Sciatic nerve (tissue), 2 donors: ENCODE measurements at regions of chr16 and their contacts with region 1.

Region 1: GRCh38 chr16:87874639-87875465 is 5.5 kb upstream of the SLC7A5 start:
- DNase-seq: no peak
- ATAC-seq: no peak

Region 2: GRCh38 chr16:87780385-87780989 is 94.4 kb before region 1 on chr16:
- intact Hi-C with region 1: loop called (anchors 5 kb)
- DNase-seq: no peak
- ATAC-seq: no peak

Region 3: DNA sequence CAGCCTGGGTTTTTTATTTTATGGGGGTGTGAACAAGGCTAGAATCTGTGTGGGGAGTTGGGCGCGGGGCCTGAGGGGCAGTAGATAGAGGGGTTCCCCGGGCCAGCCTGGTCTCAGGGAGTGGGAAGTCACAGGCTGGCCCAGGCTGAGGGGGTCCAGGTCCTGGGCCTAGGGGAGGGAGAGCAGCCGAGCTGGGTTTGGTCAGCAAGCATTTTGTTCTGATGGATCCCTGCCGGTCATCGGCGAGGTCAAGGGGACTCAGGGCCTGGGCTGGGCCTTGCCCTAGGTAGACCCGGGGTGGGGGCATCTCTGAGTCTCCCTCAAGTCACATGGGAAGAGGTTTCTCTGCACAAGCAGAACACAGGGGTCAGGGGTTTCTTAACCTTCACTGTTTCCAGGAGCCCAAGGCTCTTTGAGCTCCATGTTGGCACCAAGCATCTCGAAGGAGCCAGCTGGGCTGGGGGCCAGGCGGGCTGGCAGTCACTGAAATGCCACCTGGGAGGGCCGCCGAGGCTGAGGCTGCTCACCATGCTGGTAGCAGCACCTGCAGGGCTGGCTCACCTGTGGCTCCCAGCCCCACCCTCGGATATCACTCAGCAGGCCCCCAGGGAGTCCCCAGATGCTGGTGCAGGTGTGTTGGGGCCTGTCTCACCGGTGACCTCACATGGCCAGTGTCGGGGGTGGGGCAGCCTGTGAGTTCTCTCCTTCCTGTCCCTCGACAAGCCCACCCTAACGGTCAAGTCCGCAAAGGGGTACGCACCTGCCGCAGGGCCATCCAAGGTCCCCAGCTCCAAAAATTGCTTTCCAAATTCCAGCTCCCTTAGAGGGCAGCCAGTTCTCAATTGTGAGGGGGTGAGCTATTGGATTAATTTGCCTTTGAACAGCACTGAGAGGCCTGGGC is 46.5 kb before region 1 on chr16:
- intact Hi-C with region 1: no loop called
- DNase-seq: no peak
- ATAC-seq: no peak

Region 4: GRCh38 chr16:88026964-88027938 is 152.4 kb after region 1 on chr16:
- intact Hi-C with region 1: no loop called
- DNase-seq: peak; percentile 38
- ATAC-seq: no peak